CD8-positive, alpha-beta T cell (primary cell): ENCODE measurements at regions of chr4 and their contacts with region 1.

Region 1: DNA sequence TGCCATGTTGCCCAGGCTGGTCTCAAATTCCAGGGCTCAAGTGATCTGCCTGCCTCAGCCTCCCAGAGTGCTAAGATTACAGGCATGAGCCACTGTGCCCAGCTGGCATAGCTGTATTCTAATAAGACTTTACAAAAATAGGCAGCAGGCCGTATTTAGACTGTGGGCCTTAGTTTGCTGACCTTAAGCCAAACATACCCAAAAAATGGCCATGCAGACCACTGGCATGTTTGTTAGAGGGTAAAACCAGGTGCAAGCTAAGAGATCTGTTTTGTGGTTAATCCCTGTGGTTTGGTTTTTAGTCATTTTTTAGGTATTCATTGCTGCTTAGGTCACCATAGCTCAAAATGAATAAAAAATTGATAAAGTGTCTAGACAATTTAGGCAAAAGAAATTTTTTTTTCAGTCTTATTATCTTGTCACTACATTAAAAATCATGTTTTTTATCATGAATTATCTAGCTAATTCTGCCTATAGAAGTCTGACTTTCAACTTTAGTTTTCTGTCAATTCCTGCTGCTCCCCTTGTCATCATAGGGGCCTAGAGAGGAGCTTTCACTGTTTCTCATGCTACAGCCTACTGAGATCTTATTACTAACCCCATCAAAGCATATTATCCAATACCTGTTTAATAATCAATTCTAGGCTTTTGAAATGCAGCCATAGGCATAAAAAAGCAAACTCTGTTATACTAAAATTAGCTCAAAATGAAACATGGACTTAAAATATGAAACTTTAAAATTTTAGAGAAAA is 7.5 kb upstream of the SPINK2 start:
- DNase-seq: no peak
- ATAC-seq: no peak
- H3K4me3 ChIP-seq: no peak overlapping the region
- H3K4me3 Mint-ChIP-seq: no peak overlapping the region
- H3K27ac ChIP-seq: no peak overlapping the region
- H3K27ac Mint-ChIP-seq: no peak overlapping the region
- H3K4me1 ChIP-seq: no peaks in the 10 kb centered on the region
- H3K4me1 Mint-ChIP-seq: no peaks in the 10 kb centered on the region
- H3K27me3 ChIP-seq: no peaks in the 10 kb centered on the region
- H3K27me3 Mint-ChIP-seq: no peaks in the 10 kb centered on the region
- CTCF ChIP-seq: no peak

Region 2: DNA sequence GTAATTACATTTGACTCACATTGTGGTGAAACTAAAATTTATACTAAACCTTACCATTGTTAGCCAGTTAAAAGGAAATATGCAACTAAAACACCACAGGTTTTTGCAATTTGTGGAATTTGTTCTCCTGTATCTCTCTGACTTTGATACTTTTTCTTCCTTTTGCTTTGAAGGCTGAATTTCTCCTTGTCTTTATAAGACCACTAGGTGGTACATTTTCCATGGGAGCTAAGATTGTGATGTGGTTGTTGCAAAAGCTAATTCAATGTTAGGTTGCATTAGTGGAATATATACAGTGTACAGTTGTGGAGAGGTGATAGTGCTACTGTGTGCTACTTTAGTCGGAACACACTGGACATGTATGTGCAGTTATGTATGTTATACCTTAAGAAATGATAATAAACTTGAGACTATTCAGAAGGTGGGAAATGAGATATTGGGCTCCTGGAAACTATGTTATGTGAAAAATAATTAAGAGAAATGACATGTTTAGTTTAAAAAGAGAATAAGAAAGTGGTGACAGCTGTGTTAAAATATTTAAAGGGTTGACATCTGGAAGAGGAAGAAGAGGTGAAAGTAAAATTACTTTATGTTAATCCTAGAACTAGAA is 253.0 kb before region 1 on chr4:
- CTCF ChIA-PET with region 1: interaction called, 7 read pairs
- POLR2A ChIA-PET with region 1: no interaction called
- intact Hi-C with region 1: loop called in 1 of 2 experiments (anchors 10 kb)
- DNase-seq: peak in 2 of 9 experiments; percentile 35 to 52
- ATAC-seq: peak; percentile 36
- H3K4me3 ChIP-seq: no peak overlapping the region
- H3K4me3 Mint-ChIP-seq: no peak overlapping the region
- H3K27ac ChIP-seq: no peak overlapping the region
- H3K27ac Mint-ChIP-seq: no peak overlapping the region
- H3K4me1 ChIP-seq: no peaks in the 10 kb centered on the region
- H3K4me1 Mint-ChIP-seq: no peaks in the 10 kb centered on the region
- H3K27me3 ChIP-seq: no peaks in the 10 kb centered on the region
- H3K27me3 Mint-ChIP-seq: peaks cover 2% of the 10 kb centered on the region
- CTCF ChIP-seq: peak; percentile 15

Region 3: GRCh38 chr4:57094832-57095223 is 265.9 kb after region 1 on chr4:
- CTCF ChIA-PET with region 1: no interaction called
- POLR2A ChIA-PET with region 1: no interaction called
- intact Hi-C with region 1: no loop called
- DNase-seq: no peak
- ATAC-seq: no peak
- H3K4me3 ChIP-seq: no peak overlapping the region
- H3K4me3 Mint-ChIP-seq: no peak overlapping the region
- H3K27ac ChIP-seq: no peak overlapping the region
- H3K27ac Mint-ChIP-seq: no peak overlapping the region
- H3K4me1 ChIP-seq: no peaks in the 10 kb centered on the region
- H3K4me1 Mint-ChIP-seq: no peaks in the 10 kb centered on the region
- H3K27me3 ChIP-seq: no peaks in the 10 kb centered on the region
- H3K27me3 Mint-ChIP-seq: peaks cover 15% of the 10 kb centered on the region
- CTCF ChIP-seq: no peak